ENCODE measurements at regions of chr2 and their contacts with region 1.

Region 1: GRCh38 chr2:96208143-96209010 is at the start of gene STARD7:
- DNase-seq: peak; percentile 92
- ATAC-seq: peak; percentile 94
- H3K4me3 ChIP-seq: peak within 1 kb of the TSS; percentile 94
- H3K27ac ChIP-seq: peak within 1 kb of the TSS; percentile 92
- H3K4me1 ChIP-seq: peaks cover 27% of the 10 kb centered on the region
- H3K27me3 ChIP-seq: no peaks in the 10 kb centered on the region
- CTCF ChIP-seq: no peak; a peak in 1 of 6 replicates
- EP300 ChIP-seq: no peak
- POLR2A ChIP-seq: peak; percentile 91
- RAD21 ChIP-seq: no peak
- polyA plus RNA-seq, gene STARD7: 85.4 to 114 TPM

Region 2: DNA sequence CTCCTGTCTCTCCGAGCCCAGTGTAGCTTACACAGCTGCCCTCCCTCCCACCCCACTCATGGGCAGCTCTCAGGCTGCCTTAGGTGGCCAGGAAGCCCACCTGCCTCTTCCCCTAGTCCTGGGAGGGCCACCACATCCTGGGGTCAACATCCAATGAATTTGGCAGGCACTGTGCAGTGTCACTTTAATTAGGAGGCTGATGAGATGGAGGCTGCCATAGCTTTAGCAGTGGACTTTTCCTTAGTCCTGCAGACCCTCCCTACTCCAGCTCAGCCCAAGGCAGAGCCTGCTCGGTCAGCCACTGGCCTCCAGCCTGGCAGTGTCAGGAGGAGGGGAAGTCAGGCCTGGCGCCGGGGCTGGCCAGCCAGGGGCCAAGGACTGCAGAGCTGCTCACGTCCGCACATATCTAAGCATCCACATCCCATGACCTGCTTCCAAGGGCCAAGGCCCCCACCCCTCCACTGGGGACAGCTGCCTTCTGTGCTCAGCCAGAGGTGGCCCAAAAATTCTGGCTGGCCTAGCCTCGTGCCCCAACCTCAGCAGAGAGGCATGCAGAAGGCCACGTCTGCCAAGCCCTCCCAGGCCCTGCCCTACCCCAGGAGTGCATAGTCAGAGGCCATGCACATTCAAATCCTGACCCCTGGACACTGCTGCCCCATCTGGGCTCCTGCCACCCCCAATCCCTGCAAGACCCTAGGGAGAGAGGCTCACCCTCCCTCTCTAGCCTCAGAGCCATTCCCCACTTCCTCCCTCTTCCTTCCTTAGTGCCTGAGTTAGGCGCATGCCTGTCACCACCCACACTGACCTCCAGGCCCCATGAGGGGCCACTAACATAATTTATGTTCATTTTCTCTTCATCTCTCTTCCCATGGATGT is 125.1 kb before region 1 on chr2:
- CTCF ChIA-PET with region 1: no interaction called
- POLR2A ChIA-PET with region 1: no interaction called
- RAD21 ChIA-PET with region 1: no interaction called
- SMC1A ChIA-PET with region 1: no interaction called
- in situ Hi-C with region 1: no loop called
- intact Hi-C with region 1: no loop called
- DNase-seq: no peak
- ATAC-seq: no peak
- H3K4me3 ChIP-seq: no peak overlapping the region
- H3K27ac ChIP-seq: no peak overlapping the region
- H3K4me1 ChIP-seq: no peaks in the 10 kb centered on the region
- H3K27me3 ChIP-seq: no peaks in the 10 kb centered on the region; a peak in 1 of 4 replicates
- CTCF ChIP-seq: no peak
- EP300 ChIP-seq: no peak
- POLR2A ChIP-seq: no peak
- RAD21 ChIP-seq: no peak

Region 3: DNA sequence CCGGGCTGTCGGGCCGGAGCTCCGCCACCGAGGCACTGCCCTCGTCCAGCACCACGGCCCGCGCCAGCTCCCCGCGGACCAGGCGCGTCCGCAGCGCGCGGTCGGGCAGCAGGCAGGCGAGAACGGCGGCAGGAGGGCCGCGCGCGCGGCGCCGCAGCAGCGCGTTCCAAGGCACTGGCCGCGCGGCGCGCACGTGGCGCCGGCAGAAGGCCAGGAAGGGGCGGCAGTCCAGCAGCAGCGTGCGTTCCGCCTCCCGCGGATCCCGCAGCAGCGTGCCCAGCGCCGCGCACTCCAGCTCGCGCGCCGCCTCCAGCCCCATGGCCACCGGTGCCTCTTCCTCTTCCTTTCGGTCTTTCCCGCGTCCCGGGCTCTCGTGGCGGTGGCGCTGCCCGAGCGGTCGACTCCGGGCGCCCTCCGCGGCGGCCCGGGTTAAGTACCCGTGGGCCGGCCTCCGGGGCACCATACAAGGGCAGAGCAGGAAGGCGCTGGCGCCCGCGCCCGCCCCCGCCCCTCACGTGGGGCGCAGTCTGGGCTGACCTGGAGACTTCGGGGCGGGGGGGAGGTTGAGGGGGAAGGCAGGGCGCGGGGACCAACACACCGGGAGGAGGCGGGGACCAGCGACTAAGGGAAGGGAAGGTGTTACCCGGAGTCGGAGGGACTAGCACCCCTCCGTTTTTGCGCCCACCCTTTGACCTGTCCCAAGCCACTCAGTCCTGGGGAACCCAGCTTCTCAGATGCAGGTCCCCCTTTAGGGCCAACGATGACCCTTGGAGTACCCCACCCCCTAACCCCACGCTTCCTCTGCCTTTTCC is 63.1 kb before region 1 on chr2 and contains the start of gene DUSP2:
- CTCF ChIA-PET with region 1: interaction called, 6 read pairs
- POLR2A ChIA-PET with region 1: interaction called, 12 read pairs
- RAD21 ChIA-PET with region 1: interaction called, 11 read pairs
- SMC1A ChIA-PET with region 1: interaction called, 5 read pairs
- in situ Hi-C with region 1: no loop called
- intact Hi-C with region 1: loop called (anchors 2 kb)
- DNase-seq: peak; percentile 85
- ATAC-seq: peak; percentile 62
- H3K4me3 ChIP-seq: peak within 1 kb of the TSS; percentile 92
- H3K27ac ChIP-seq: peak within 1 kb of the TSS; percentile 89
- H3K4me1 ChIP-seq: peaks cover 45% of the 10 kb centered on the region
- H3K27me3 ChIP-seq: no peaks in the 10 kb centered on the region
- CTCF ChIP-seq: no peak
- EP300 ChIP-seq: peak in 1 of 2 experiments; percentile 36; a peak in 3 of 4 replicates
- POLR2A ChIP-seq: no peak
- RAD21 ChIP-seq: 0 out of 2 replicates have a peak, but pooled peaks have one; percentile 22
- polyA plus RNA-seq, gene DUSP2: 9.7 to 34.6 TPM

Region 4: DNA sequence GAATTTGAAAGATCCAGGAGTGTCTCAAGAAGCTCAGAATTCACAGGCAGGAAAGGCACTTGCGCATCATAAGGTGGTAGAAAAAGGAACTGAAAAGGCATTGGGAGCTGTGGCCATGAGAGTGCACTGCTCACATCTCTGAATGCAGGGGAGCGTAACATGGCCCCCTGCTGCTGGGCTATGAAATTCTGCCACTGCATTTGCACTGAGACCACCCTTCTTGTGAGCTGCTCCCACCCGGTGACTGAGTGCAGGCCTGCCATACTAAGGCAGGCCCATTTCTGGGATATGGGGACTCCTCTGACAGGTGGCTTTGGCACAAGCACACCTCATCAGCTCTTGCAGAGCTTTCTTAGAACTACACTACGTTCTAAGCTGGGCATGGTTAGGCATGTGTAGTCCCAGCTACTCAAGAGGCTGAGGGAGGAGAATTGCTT is 25.5 kb after region 1 on chr2:
- CTCF ChIA-PET with region 1: interaction called, 76 read pairs
- POLR2A ChIA-PET with region 1: interaction called, 66 read pairs
- RAD21 ChIA-PET with region 1: interaction called, 93 read pairs
- SMC1A ChIA-PET with region 1: interaction called, 116 read pairs
- in situ Hi-C with region 1: no loop called
- intact Hi-C with region 1: no loop called
- DNase-seq: peak; percentile 68
- ATAC-seq: peak; percentile 99
- H3K4me3 ChIP-seq: no peak overlapping the region
- H3K27ac ChIP-seq: peak overlapping the region; percentile 50
- H3K4me1 ChIP-seq: peaks cover 21% of the 10 kb centered on the region
- H3K27me3 ChIP-seq: no peaks in the 10 kb centered on the region
- CTCF ChIP-seq: peak; percentile 44 to 51 (median 46); a peak in 5 of 6 replicates
- EP300 ChIP-seq: peak in 1 of 2 experiments; percentile 51; a peak in 1 of 4 replicates
- POLR2A ChIP-seq: no peak
- RAD21 ChIP-seq: peak; percentile 48

Region 5: DNA sequence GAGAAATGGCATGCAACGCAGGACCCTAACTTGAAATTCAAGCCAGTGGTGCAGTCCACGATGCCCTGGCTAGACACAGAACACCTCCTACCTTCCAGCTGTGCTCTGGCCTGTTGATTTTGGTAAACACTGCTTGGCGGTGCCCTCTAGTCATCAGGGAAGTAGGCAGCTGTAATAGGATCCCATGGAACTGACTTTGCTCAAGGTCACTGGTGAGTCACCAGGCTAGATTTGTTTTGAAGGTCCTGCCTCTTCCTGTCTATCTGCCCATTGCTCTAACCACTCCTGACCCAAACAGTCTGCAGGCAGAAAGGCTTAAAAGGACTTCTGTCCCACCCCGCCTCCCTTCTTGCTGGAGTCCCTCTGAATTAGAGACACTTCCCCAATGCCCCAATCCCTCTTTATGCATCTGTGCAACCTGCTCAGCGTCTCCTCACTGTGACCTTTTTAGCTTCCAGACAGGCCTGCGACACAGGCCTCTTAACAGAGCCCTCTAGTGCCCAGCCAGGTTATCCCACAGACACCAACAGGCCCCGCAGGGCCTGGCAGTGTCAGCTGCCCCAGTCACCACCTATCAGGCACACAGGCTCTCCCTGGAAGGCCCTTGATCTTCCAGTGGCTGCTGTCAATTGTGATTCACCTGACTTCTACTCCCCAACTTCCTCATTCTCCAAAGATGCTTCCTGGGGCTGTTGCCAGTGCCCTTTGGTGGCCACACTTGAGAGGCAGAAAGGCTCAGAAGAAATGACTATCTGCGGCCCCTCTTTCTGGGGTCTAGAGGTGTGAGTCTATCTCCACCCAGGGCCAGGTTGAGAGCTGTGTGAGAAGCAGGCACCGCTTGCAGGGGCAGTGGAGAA is 52.3 kb after region 1 on chr2:
- CTCF ChIA-PET with region 1: interaction called, 90 read pairs
- POLR2A ChIA-PET with region 1: interaction called, 9 read pairs
- RAD21 ChIA-PET with region 1: interaction called, 10 read pairs
- SMC1A ChIA-PET with region 1: interaction called, 20 read pairs
- in situ Hi-C with region 1: no loop called
- intact Hi-C with region 1: loop called (anchors 1 kb)
- DNase-seq: no peak
- ATAC-seq: peak; percentile 78
- H3K4me3 ChIP-seq: no peak overlapping the region
- H3K27ac ChIP-seq: peak overlapping the region; percentile 45
- H3K4me1 ChIP-seq: peaks cover 32% of the 10 kb centered on the region
- H3K27me3 ChIP-seq: no peaks in the 10 kb centered on the region
- CTCF ChIP-seq: peak; percentile 60 to 74 (median 72)
- EP300 ChIP-seq: no peak
- POLR2A ChIP-seq: no peak
- RAD21 ChIP-seq: peak; percentile 39; the same call in 1 of the 2 replicates

Region 6: GRCh38 chr2:96320728-96321622 is 112.6 kb after region 1 on chr2:
- CTCF ChIA-PET with region 1: interaction called, 6 read pairs
- POLR2A ChIA-PET with region 1: interaction called, 4 read pairs
- RAD21 ChIA-PET with region 1: interaction called, 4 read pairs
- SMC1A ChIA-PET with region 1: no interaction called
- in situ Hi-C with region 1: no loop called
- intact Hi-C with region 1: loop called (anchors 5 kb)
- DNase-seq: no peak
- ATAC-seq: peak; percentile 48
- H3K4me3 ChIP-seq: peak overlapping the region; percentile 90
- H3K27ac ChIP-seq: peak overlapping the region; percentile 88
- H3K4me1 ChIP-seq: peaks cover 30% of the 10 kb centered on the region
- H3K27me3 ChIP-seq: no peaks in the 10 kb centered on the region
- CTCF ChIP-seq: no peak
- EP300 ChIP-seq: no peak
- POLR2A ChIP-seq: no peak; the same call in 1 of the 2 replicates
- RAD21 ChIP-seq: no peak

Region 7: GRCh38 chr2:96369186-96369585 is 160.8 kb after region 1 on chr2:
- CTCF ChIA-PET with region 1: no interaction called
- POLR2A ChIA-PET with region 1: no interaction called
- RAD21 ChIA-PET with region 1: no interaction called
- SMC1A ChIA-PET with region 1: no interaction called
- in situ Hi-C with region 1: no loop called
- intact Hi-C with region 1: no loop called
- DNase-seq: no peak
- ATAC-seq: no peak
- H3K4me3 ChIP-seq: no peak overlapping the region
- H3K27ac ChIP-seq: no peak overlapping the region
- H3K4me1 ChIP-seq: no peaks in the 10 kb centered on the region
- H3K27me3 ChIP-seq: no peaks in the 10 kb centered on the region
- CTCF ChIP-seq: no peak
- EP300 ChIP-seq: no peak
- POLR2A ChIP-seq: no peak
- RAD21 ChIP-seq: no peak

Measured in GM12878 (cell line).